ACHN (cell line): ENCODE measurements at regions of chr1 and their contacts with region 1.

Region 1: DNA sequence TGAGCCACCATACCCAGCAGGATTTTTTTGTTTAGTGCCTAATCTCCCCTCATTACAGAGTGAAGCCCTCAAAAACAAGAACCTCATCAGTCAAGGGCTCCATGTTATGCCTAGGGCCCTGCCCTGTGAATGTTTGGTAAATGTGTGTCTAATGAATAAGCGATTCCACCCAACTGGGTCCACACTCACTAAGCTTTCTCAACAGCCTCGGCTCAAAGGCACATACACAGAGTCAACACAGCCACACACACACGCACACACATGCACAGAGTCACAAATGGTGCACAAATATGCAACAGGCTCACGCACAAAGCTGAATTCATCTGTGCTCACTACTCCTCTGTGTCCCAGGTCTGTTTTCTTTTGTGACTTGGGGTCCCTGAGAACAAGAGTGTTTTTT is 11.7 kb upstream of the SYNC start:
- DNase-seq: no peak

Region 2: DNA sequence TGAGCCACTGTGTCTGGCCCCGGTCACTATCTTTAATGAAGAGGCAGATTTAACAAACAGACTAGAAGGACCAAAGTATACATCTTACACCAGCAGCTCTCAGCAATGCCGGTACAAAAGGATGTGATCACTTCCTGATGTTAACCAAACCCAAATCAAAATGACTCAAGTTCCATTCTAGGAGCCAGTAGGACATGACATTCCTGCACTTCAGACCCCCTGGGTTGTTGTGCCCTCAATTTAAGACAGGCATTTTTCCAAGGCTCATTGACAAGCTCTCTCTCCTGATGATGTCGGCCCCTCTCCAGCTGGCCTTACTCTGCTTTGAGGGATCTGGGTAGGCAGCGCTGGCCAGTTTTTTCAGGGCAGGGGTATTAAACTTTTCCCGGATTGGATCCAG is 67.8 kb after region 1 on chr1:
- in situ Hi-C with region 1: loop called (anchors 5 kb)
- DNase-seq: no peak

Region 3: DNA sequence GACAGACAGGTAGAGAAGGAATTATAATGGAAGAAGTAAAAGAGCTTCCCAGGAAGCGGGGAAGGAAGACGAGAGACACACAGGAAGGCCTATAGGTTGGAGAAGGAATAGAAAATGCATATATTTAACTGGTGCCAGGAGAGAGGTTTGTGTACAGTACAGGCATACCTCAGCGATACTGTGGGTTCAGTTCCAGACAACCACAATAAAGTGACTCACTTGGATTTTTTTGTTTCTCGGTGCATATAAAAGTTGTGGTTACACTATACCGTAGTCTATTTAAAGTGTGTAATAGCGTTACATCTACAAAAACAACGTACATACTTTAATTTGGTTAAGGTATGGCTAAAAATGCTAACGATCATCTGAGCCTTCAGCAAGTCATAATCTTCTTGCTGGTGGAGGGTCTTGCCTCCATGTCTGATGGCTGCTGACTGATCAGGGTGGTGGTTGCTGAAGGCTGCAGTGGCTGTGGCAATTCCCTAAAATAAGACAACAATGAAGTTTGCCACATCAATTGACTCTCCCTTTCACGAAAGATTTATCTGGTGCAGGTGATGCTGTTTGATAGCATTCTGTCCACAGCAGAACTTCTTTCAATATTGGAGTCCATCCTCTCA is 86.9 kb after region 1 on chr1:
- in situ Hi-C with region 1: no loop called
- DNase-seq: no peak